ENCODE measurements at regions of chr19 and their contacts with region 1.

Region 1: DNA sequence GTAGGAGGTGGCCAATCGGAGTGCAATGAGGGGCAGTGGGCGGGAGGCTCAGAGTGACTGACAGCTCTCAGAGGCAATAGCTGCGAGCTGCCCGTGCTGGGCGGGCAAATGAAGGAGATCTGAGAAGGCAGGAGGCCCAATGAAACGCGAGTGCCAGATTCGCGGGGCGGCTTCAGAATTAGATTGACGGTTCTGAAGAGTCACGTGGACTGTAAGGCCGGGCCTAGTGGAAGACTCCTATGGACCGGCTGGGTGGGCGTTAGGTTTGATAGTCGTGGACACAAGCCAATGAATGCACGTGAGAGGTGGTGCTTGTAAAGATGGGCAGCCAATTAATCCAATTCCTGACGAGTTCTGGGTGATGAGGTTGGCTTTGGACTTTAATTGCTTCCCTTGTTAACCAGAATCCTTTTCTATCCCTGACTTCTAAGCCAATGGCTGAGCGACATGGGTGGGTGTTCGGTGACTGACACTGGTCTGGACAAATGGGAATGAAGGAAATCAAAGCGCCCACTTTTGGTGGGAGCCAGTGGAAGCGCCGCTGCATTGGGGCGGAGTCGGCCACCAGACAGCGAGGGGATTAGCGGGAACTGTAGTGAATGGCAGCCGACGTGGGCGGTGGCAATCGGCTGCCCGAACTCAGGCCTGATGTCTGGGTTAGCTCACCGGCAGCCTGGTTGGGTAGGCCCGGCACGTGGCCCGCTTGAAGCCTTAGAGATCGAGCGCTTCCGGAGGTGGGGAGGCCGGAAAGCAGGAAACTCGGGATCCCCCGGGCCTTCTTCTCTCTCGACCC is 524 bp upstream of the KHSRP start:
- DNase-seq: peak; percentile 100
- ATAC-seq: peak; percentile 93
- H3K4me3 ChIP-seq: peak overlapping the region in 1 of 3 experiments; percentile 18; a peak in 1 of 6 replicates
- H3K27ac ChIP-seq: peak overlapping the region; percentile 62
- H3K4me1 ChIP-seq: peaks cover 33% of the 10 kb centered on the region
- H3K27me3 ChIP-seq: no peaks in the 10 kb centered on the region; a peak in 1 of 5 replicates
- CTCF ChIP-seq: 0 out of 2 replicates have a peak, but pooled peaks have one; percentile 3
- EP300 ChIP-seq: no peak
- POLR2A ChIP-seq: no peak
- RAD21 ChIP-seq: peak; percentile 37; the same call in 1 of the 2 replicates

Region 2: GRCh38 chr19:6362027-6362350 is 63.1 kb before region 1 on chr19:
- CTCF ChIA-PET with region 1: no interaction called
- POLR2A ChIA-PET with region 1: interaction called, 13 read pairs
- in situ Hi-C with region 1: no loop called
- intact Hi-C with region 1: no loop called
- DNase-seq: no peak
- ATAC-seq: no peak
- H3K4me3 ChIP-seq: peak overlapping the region; percentile 63 to 84 (median 84)
- H3K27ac ChIP-seq: peak overlapping the region; percentile 49
- H3K4me1 ChIP-seq: peaks cover 27% of the 10 kb centered on the region
- H3K27me3 ChIP-seq: no peaks in the 10 kb centered on the region; a peak in 1 of 5 replicates
- CTCF ChIP-seq: no peak
- EP300 ChIP-seq: no peak
- POLR2A ChIP-seq: no peak
- RAD21 ChIP-seq: no peak